ENCODE measurements at regions of chr18 and their contacts with region 1.

Region 1: GRCh38 chr18:22933206-22933957 is at the start of gene RBBP8:
- DNase-seq: peak; percentile 85
- H3K4me3 Mint-ChIP-seq: peak within 1 kb of the TSS; percentile 98
- H3K27ac Mint-ChIP-seq: peak within 1 kb of the TSS; percentile 95
- H3K4me1 Mint-ChIP-seq: peaks cover 41% of the 10 kb centered on the region
- H3K27me3 Mint-ChIP-seq: peaks cover 3% of the 10 kb centered on the region
- total RNA-seq, gene RBBP8: 93.4 and 95.1 TPM in 2 replicates

Region 2: GRCh38 chr18:21600526-21601410 is 1332.6 kb before region 1 on chr18 and contains the start of gene ESCO1:
- intact Hi-C with region 1: loop called (anchors 5 kb)
- DNase-seq: peak; percentile 94
- H3K4me3 Mint-ChIP-seq: peak within 1 kb of the TSS; percentile 94
- H3K27ac Mint-ChIP-seq: peak within 1 kb of the TSS; percentile 99
- H3K4me1 Mint-ChIP-seq: peaks cover 20% of the 10 kb centered on the region
- H3K27me3 Mint-ChIP-seq: no peaks in the 10 kb centered on the region
- total RNA-seq, gene ESCO1: 20.7 and 21.5 TPM in 2 replicates

Region 3: DNA sequence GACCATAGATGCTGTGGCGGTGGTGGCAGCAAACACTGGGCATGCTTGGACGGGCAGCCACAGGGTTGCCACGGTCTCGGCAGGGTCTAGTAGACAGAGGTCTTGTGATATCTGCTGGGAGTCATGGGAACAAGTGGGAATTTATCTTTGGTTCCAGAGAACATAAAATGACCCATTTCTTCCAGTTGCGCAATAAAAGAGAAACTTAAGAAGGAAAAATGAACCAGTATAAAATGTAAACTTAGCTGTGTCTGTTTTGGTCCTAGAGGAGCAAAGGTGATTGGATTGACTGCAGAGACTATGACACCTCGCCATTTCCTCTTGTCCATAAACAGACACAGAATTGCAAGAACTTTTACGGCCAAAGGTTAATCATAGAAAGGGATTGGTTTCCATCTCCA is 132.8 kb before region 1 on chr18:
- intact Hi-C with region 1: loop called (anchors 5 kb)
- DNase-seq: no peak
- H3K4me3 Mint-ChIP-seq: no peak overlapping the region
- H3K27ac Mint-ChIP-seq: no peak overlapping the region
- H3K4me1 Mint-ChIP-seq: no peaks in the 10 kb centered on the region
- H3K27me3 Mint-ChIP-seq: peaks cover 17% of the 10 kb centered on the region

Region 4: DNA sequence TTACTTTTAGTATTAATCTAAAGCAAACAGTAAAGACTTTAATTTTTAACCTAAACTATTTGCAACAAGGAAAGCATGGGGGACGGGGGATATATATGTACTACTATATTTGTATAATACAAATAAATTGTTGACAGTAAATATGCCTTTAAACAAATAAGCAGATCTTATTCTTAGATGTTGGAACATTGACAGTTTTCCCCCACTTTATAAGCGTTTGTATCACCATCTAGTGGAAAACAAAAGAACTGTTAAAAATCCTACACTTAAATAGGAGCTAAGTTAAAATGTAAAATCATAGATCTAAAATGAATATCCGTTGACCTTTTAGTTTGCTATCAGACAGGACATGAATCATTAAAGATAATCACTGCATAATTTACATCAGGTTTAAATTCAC is 49.8 kb after region 1 on chr18:
- intact Hi-C with region 1: loop called (anchors 1 kb)
- DNase-seq: no peak
- H3K4me3 Mint-ChIP-seq: no peak overlapping the region
- H3K27ac Mint-ChIP-seq: no peak overlapping the region
- H3K4me1 Mint-ChIP-seq: peaks cover 11% of the 10 kb centered on the region
- H3K27me3 Mint-ChIP-seq: no peaks in the 10 kb centered on the region

Region 5: GRCh38 chr18:23155537-23155936 is 222.2 kb after region 1 on chr18:
- intact Hi-C with region 1: no loop called
- DNase-seq: no peak
- H3K4me3 Mint-ChIP-seq: no peak overlapping the region
- H3K27ac Mint-ChIP-seq: no peak overlapping the region
- H3K4me1 Mint-ChIP-seq: no peaks in the 10 kb centered on the region
- H3K27me3 Mint-ChIP-seq: no peaks in the 10 kb centered on the region

Region 6: GRCh38 chr18:23231340-23232021 is 298.1 kb after region 1 on chr18:
- intact Hi-C with region 1: loop called (anchors 1 kb)
- DNase-seq: peak; percentile 80
- H3K4me3 Mint-ChIP-seq: peak overlapping the region; percentile 72
- H3K27ac Mint-ChIP-seq: peak overlapping the region; percentile 89
- H3K4me1 Mint-ChIP-seq: peaks cover 64% of the 10 kb centered on the region
- H3K27me3 Mint-ChIP-seq: peaks cover 8% of the 10 kb centered on the region

Region 7: DNA sequence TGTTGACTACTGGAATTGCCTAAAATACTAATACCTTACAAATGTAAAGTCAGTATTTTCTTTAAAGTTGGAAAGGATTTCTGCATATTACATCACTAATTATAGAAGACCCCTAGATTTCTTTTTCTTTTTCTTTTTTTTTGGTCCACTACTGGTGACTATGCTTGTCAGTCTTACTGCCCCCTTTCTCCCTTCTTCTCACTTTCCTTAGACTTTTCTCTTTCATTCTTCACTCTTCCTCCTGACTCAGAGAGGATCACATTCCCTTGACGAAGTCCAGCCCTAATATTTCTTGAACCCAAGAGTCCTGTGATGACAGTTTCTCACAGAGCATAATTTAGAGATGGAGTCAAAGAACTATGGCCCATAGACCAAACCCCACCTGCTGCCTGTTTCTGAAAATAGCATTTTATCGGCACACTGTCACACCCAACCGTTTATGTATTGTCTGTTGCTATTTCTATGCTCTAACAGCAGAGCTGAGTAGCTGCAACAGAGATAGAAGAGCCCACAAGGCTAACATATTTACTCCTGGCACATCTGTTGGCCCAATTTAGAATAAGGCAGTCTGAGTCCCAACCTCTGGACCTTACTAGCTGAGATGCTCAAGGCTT is 479.1 kb after region 1 on chr18:
- intact Hi-C with region 1: loop called (anchors 1 kb)
- DNase-seq: no peak
- H3K4me3 Mint-ChIP-seq: no peak overlapping the region
- H3K27ac Mint-ChIP-seq: no peak overlapping the region
- H3K4me1 Mint-ChIP-seq: no peaks in the 10 kb centered on the region
- H3K27me3 Mint-ChIP-seq: peaks cover 5% of the 10 kb centered on the region

Region 8: GRCh38 chr18:23503038-23503962 is 569.9 kb after region 1 on chr18 and contains the start of gene RMC1:
- intact Hi-C with region 1: loop called (anchors 2 kb)
- DNase-seq: peak; percentile 96
- H3K4me3 Mint-ChIP-seq: peak within 1 kb of the TSS; percentile 97
- H3K27ac Mint-ChIP-seq: peak within 1 kb of the TSS; percentile 91
- H3K4me1 Mint-ChIP-seq: peaks cover 66% of the 10 kb centered on the region
- H3K27me3 Mint-ChIP-seq: no peaks in the 10 kb centered on the region
- total RNA-seq, gene RMC1: 56.3 and 56.7 TPM in 2 replicates